ENCODE measurements at regions of chr3 and their contacts with region 1.

Region 1: GRCh38 chr3:45205126-45205525 is 21.0 kb downstream of the TMEM158 start:
- DNase-seq: no peak
- H3K4me3 ChIP-seq: no peak overlapping the region
- H3K27ac ChIP-seq: no peak overlapping the region
- H3K4me1 ChIP-seq: peaks cover 5% of the 10 kb centered on the region
- H3K27me3 ChIP-seq: no peaks in the 10 kb centered on the region
- CTCF ChIP-seq: no peak
- POLR2A ChIP-seq: no peak

Region 2: GRCh38 chr3:44510000-44510368 is 695.1 kb before region 1 on chr3:
- intact Hi-C with region 1: no loop called
- DNase-seq: peak; percentile 41
- H3K4me3 ChIP-seq: peak overlapping the region; percentile 82 to 83
- H3K27ac ChIP-seq: peak overlapping the region; percentile 71 to 92
- H3K4me1 ChIP-seq: no peaks in the 10 kb centered on the region
- H3K27me3 ChIP-seq: no peaks in the 10 kb centered on the region
- CTCF ChIP-seq: no peak
- POLR2A ChIP-seq: no peak

Region 3: GRCh38 chr3:45043728-45044299 is 161.3 kb before region 1 on chr3:
- intact Hi-C with region 1: loop called (anchors 5 kb)
- DNase-seq: no peak
- H3K4me3 ChIP-seq: no peak overlapping the region
- H3K27ac ChIP-seq: no peak overlapping the region
- H3K4me1 ChIP-seq: peaks cover 11% of the 10 kb centered on the region
- H3K27me3 ChIP-seq: no peaks in the 10 kb centered on the region
- CTCF ChIP-seq: no peak
- POLR2A ChIP-seq: no peak

Measured in testis (tissue), 5 donors.